Activated CD4-positive, alpha-beta T cell treated with anti-CD3 and anti-CD28 coated beads, Interleukin-2, amount 10 ng/mL, durations not matched to agents 24 days and 14 days (primary cell): ENCODE measurements at regions of chr12 and their contacts with region 1.

Region 1: GRCh38 chr12:27207615-27208413 is 36.3 kb upstream of the STK38L start:
- DNase-seq: peak; percentile 76
- H3K4me3 Mint-ChIP-seq: no peak overlapping the region
- H3K27ac Mint-ChIP-seq: peak overlapping the region; percentile 47
- H3K4me1 Mint-ChIP-seq: peaks cover 21% of the 10 kb centered on the region
- H3K27me3 Mint-ChIP-seq: no peaks in the 10 kb centered on the region

Region 2: GRCh38 chr12:26768611-26769603 is 438.9 kb before region 1 on chr12:
- intact Hi-C with region 1: no loop called
- DNase-seq: peak; percentile 63
- H3K4me3 Mint-ChIP-seq: peak overlapping the region; percentile 1
- H3K27ac Mint-ChIP-seq: peak overlapping the region; percentile 48
- H3K4me1 Mint-ChIP-seq: peaks cover 27% of the 10 kb centered on the region
- H3K27me3 Mint-ChIP-seq: no peaks in the 10 kb centered on the region

Region 3: DNA sequence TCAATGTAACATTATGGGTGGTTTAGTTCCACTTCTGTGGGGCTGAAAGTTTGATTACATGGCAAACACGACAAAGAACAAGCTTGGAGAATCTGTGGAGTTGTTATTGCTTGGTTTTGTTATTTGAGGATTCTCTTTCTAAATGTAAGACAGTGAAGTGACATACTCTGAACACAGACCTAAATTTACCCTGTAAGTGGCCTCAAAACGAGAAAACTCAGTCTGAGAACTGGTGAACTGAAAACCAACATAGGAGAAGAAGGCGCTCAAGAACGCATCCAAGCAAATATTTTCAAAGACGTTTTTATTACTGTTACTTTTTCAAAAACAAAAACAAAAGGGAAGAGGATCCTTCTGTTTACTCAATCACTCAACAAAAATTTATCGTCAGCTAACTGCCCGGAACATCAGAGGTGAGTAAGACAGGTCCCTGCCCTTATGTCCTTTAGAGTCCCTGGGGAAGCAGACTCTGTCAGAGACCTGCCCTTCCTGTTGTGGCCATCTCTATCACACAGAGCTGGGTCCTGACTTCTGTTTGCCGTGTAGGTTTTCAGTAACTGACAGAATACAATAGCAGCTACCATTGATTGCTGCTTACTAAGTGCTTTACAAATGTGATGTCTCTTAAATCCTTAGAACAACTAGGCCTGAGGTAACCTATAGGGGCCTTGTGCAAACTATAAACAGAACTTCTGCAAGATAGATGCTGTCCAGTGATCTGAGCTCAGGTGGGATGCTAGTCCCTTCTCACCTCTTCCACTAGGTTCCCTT is 46.2 kb before region 1 on chr12:
- intact Hi-C with region 1: no loop called
- DNase-seq: no peak
- H3K4me3 Mint-ChIP-seq: no peak overlapping the region
- H3K27ac Mint-ChIP-seq: no peak overlapping the region
- H3K4me1 Mint-ChIP-seq: peaks cover 5% of the 10 kb centered on the region
- H3K27me3 Mint-ChIP-seq: no peaks in the 10 kb centered on the region

Region 4: GRCh38 chr12:27220057-27220987 is 12.5 kb after region 1 on chr12:
- intact Hi-C with region 1: loop called (anchors 1 kb)
- DNase-seq: no peak
- H3K4me3 Mint-ChIP-seq: peak overlapping the region; percentile 1
- H3K27ac Mint-ChIP-seq: peak overlapping the region; percentile 49
- H3K4me1 Mint-ChIP-seq: peaks cover 11% of the 10 kb centered on the region
- H3K27me3 Mint-ChIP-seq: peaks cover 5% of the 10 kb centered on the region

Region 5: GRCh38 chr12:27237790-27238771 is 30.3 kb after region 1 on chr12:
- intact Hi-C with region 1: loop called (anchors 2 kb)
- DNase-seq: peak; percentile 71
- H3K4me3 Mint-ChIP-seq: peak overlapping the region; percentile 4
- H3K27ac Mint-ChIP-seq: peak overlapping the region; percentile 73
- H3K4me1 Mint-ChIP-seq: peaks cover 25% of the 10 kb centered on the region
- H3K27me3 Mint-ChIP-seq: no peaks in the 10 kb centered on the region

Region 6: DNA sequence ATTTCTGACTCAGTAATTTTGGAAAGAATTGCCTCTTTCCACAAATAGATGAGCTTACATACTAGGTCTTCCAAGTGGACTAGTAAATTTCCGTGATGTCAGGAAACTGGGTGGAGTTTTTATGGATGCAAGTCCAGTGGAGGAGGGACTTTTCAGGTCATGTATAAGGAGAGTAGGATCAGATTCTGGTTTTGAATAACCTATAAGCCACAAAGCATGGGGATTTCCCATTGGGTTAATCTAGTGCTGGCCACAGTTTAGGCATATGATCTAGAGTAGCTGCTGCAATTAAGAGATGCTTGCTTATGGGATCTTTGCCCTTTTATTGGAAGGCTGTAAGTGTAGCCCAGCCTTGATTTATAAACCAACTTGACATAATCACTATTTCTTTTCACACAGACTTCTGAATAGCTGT is 70.0 kb after region 1 on chr12:
- intact Hi-C with region 1: no loop called
- DNase-seq: peak; percentile 72
- H3K4me3 Mint-ChIP-seq: no peak overlapping the region
- H3K27ac Mint-ChIP-seq: no peak overlapping the region
- H3K4me1 Mint-ChIP-seq: peaks cover 14% of the 10 kb centered on the region
- H3K27me3 Mint-ChIP-seq: no peaks in the 10 kb centered on the region

Region 7: GRCh38 chr12:27434673-27435565 is 227.1 kb after region 1 on chr12:
- intact Hi-C with region 1: no loop called
- DNase-seq: peak; percentile 66
- H3K4me3 Mint-ChIP-seq: no peak overlapping the region
- H3K27ac Mint-ChIP-seq: peak overlapping the region; percentile 52
- H3K4me1 Mint-ChIP-seq: peaks cover 51% of the 10 kb centered on the region
- H3K27me3 Mint-ChIP-seq: no peaks in the 10 kb centered on the region